MCF 10A (cell line): ENCODE measurements at regions of chr3 and their contacts with region 1.

Region 1: DNA sequence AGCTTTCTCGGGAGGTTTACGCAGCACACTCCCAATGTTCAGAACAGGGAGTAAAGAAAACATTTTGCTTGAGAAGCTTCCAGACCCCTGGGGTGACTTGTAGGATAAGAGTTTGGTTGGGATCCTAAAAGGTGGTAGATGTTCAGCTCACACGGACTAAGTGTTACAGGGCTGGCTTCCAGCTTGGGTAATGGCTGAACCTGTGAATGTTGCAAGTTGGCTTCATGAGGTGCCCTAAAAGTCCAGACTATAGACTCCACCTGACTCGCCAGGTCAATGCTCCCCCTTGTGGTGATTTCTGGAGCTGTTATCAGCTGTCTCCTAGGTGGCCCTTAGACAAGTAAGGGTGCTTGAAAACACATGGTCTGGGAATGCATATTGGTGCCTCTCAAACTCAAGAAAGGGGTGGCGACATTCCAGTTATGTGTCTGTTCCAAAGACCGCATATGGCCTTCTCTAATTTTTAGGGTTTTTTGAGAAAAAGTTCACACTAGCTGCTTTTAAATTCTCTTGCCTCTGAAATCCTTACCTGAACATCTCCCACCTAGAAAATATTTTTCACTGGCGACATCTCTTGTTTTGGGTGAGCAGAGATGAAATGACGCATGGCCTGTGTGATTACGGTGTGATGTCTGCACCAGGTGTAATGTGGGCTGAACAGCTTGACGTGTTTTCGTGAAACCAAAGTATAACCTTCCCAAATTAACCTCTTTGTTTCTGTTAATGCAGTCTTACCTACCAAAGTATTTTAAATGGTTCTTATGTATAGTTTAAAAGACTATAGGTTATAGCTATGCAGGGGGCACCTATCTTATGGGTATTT is 175.7 kb upstream of the KBTBD8 start:
- DNase-seq: peak; percentile 81
- H3K4me3 Mint-ChIP-seq: no peak overlapping the region
- H3K27ac Mint-ChIP-seq: no peak overlapping the region
- H3K4me1 Mint-ChIP-seq: no peaks in the 10 kb centered on the region
- H3K27me3 Mint-ChIP-seq: peaks cover 11% of the 10 kb centered on the region
- CTCF ChIP-seq: peak; percentile 66

Region 2: GRCh38 chr3:66253790-66254620 is 568.4 kb before region 1 on chr3:
- CTCF ChIA-PET with region 1: interaction called, 74 read pairs
- POLR2A ChIA-PET with region 1: no interaction called
- intact Hi-C with region 1: loop called (anchors 1 kb)
- DNase-seq: peak; percentile 49
- H3K4me3 Mint-ChIP-seq: no peak overlapping the region
- H3K27ac Mint-ChIP-seq: no peak overlapping the region
- H3K4me1 Mint-ChIP-seq: no peaks in the 10 kb centered on the region
- H3K27me3 Mint-ChIP-seq: no peaks in the 10 kb centered on the region
- CTCF ChIP-seq: peak; percentile 59

Region 3: DNA sequence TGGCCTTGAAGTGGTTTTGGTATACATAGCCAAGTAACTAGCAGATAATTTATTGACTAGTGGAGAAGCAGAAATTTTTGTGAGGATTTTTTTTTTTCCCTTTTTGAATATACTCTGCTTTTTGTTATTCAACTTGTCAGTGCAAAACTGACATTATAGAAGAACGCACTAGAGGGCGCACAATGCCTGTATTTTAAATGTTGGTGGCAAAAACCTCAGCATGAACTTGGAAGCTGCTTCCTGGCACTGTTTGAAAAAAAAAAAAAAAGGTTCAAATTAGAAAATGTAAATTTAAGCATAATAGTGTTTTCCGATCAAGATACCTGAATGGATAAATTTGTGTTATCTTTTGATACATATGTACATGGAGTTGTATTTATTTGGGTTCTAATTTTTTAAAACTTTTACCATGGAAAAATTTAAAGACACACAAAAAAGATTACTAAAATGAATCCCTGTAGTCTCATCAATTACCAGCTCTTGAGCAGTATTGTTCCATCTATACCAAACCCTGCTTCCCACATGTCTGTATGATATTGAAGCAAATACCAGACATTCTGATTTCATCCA is 545.6 kb before region 1 on chr3:
- CTCF ChIA-PET with region 1: interaction called, 39 read pairs
- POLR2A ChIA-PET with region 1: interaction called, 7 read pairs
- intact Hi-C with region 1: loop called (anchors 1 kb)
- DNase-seq: peak; percentile 68
- H3K4me3 Mint-ChIP-seq: no peak overlapping the region
- H3K27ac Mint-ChIP-seq: no peak overlapping the region
- H3K4me1 Mint-ChIP-seq: no peaks in the 10 kb centered on the region
- H3K27me3 Mint-ChIP-seq: no peaks in the 10 kb centered on the region
- CTCF ChIP-seq: peak; percentile 56

Region 4: GRCh38 chr3:66803206-66803605 is 19.2 kb before region 1 on chr3:
- CTCF ChIA-PET with region 1: interaction called, 26 read pairs
- POLR2A ChIA-PET with region 1: no interaction called
- intact Hi-C with region 1: no loop called
- DNase-seq: no peak
- H3K4me3 Mint-ChIP-seq: no peak overlapping the region
- H3K27ac Mint-ChIP-seq: no peak overlapping the region
- H3K4me1 Mint-ChIP-seq: no peaks in the 10 kb centered on the region
- H3K27me3 Mint-ChIP-seq: no peaks in the 10 kb centered on the region
- CTCF ChIP-seq: no peak

Region 5: GRCh38 chr3:66836363-66837152 is 14.2 kb after region 1 on chr3:
- CTCF ChIA-PET with region 1: interaction called, 17 read pairs
- POLR2A ChIA-PET with region 1: no interaction called
- intact Hi-C with region 1: no loop called
- DNase-seq: no peak
- H3K4me3 Mint-ChIP-seq: no peak overlapping the region
- H3K27ac Mint-ChIP-seq: no peak overlapping the region
- H3K4me1 Mint-ChIP-seq: no peaks in the 10 kb centered on the region
- H3K27me3 Mint-ChIP-seq: no peaks in the 10 kb centered on the region
- CTCF ChIP-seq: no peak